HCT116 (cell line): ENCODE measurements at regions of chr16 and their contacts with region 1.

Region 1: GRCh38 chr16:3173892-3174617 is 13.9 kb upstream of the OR1F1 start:
- DNase-seq: no peak
- ATAC-seq: peak; percentile 30
- H3K4me3 ChIP-seq: peak overlapping the region; percentile 23 to 24
- H3K27ac ChIP-seq: peak overlapping the region; percentile 26
- H3K4me1 ChIP-seq: peaks cover 35 to 54% of the 10 kb centered on the region in 2 experiments
- H3K27me3 ChIP-seq: no peaks in the 10 kb centered on the region
- CTCF ChIP-seq: peak in 2 of 3 experiments; percentile 89 to 94; a peak in 4 of 6 replicates
- POLR2A ChIP-seq: peak; percentile 44
- RAD21 ChIP-seq: no peak

Region 2: DNA sequence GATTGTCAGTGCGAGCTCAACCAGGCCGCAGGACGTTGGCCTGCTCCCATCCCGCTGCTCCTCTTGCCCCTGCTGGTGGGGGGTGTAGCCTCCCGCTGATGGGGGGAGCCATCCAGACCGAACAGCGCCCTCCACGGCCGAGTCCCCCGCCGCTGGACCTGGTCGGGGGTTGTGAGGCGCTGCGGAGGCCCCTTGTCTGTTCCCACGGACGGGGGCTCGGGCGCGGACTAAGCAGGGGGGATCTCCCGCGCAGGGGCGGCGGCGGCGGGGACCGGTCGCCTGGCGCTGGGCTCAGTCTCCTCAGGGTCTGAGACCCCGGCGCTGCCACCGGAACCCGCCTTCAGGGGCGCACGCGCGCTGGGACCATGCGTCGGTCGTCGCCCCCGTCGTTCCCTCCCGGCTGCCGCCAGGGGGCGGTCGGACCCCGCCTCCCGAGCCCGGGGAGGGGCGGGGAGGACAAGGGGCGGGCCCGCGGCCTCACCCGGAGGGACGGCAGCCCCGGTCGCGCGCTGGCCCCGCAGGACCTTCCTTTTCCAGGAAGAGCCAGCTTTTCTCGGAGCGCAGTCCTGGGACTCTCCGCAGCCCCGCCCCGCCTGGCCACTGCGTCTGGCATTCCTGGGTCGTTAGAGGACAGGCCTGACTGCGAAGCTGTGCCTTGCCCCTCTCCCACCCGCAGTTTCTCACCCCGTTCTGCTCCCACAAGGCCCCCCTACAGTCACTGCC is 114.9 kb before region 1 on chr16:
- CTCF ChIA-PET with region 1: interaction called, 5 read pairs
- POLR2A ChIA-PET with region 1: interaction called, 3 read pairs
- RAD21 ChIA-PET with region 1: no interaction called
- intact Hi-C with region 1: loop called (anchors 10 kb)
- DNase-seq: peak; percentile 60
- ATAC-seq: peak; percentile 86
- H3K4me3 ChIP-seq: peak overlapping the region; percentile 81 to 87
- H3K27ac ChIP-seq: peak overlapping the region; percentile 84
- H3K4me1 ChIP-seq: peaks cover 0 to 22% of the 10 kb centered on the region in 2 experiments; a peak in 3 of 4 replicates
- H3K27me3 ChIP-seq: no peaks in the 10 kb centered on the region
- CTCF ChIP-seq: peak; percentile 58 to 94 (median 66)
- POLR2A ChIP-seq: no peak
- RAD21 ChIP-seq: peak; percentile 89

Region 3: GRCh38 chr16:3094289-3095027 is 79.6 kb before region 1 on chr16:
- CTCF ChIA-PET with region 1: no interaction called
- POLR2A ChIA-PET with region 1: no interaction called
- RAD21 ChIA-PET with region 1: no interaction called
- intact Hi-C with region 1: loop called (anchors 2 kb)
- DNase-seq: peak; percentile 47
- ATAC-seq: peak; percentile 70
- H3K4me3 ChIP-seq: no peak overlapping the region
- H3K27ac ChIP-seq: no peak overlapping the region
- H3K4me1 ChIP-seq: peaks cover under 1 to 8% of the 10 kb centered on the region in 2 experiments; a peak in 3 of 4 replicates
- H3K27me3 ChIP-seq: no peaks in the 10 kb centered on the region
- CTCF ChIP-seq: peak; percentile 55 to 85 (median 80); a peak in 5 of 6 replicates
- POLR2A ChIP-seq: no peak
- RAD21 ChIP-seq: peak; percentile 62

Region 4: DNA sequence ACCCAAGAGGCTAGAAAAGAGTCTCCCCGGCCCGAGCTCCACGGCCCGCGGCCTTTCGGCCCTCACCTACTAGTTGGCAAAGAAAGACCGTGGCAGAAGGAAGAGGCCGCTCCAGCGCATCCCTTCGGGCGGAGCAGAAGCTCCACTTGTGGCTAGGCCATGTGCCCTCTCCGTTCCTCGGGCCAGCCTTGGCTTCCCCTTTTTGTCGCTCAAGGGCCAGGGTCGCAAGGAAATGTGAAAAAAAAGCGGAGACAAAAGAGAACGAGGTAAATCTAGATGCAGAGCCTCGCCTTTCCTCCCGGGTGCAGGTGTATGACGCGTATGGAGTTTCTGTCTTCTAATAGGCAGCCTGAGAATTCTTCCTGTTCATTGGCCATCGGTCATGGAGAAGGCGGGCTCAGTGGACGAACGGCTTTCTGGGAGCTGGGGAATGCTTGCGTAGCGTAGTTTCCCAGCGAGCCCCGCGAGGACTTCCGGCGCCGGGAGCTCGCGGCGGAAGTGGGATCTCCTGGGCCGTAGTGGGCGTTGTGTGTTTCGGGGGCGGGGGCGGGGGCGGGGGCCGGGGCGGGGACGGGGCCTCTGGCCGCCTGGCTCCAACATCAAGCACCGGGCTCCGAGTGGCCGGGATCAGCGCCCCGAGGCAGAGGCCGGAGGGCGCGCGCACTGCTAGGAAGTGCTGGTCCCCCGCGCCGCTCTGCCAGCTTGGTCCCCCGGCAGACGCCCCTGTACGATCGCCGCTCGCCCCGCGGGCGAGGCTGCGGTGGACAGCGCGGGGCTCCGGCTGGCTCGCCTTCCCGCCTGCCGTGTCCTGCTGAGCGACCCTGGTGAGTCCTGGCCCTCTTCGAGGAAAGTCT is 39.3 kb before region 1 on chr16 and contains the start of gene ZNF213:
- CTCF ChIA-PET with region 1: interaction called, 22 read pairs
- POLR2A ChIA-PET with region 1: interaction called, 11 read pairs
- RAD21 ChIA-PET with region 1: no interaction called
- intact Hi-C with region 1: loop called (anchors 5 kb)
- DNase-seq: peak; percentile 95
- ATAC-seq: peak; percentile 92
- H3K4me3 ChIP-seq: peak within 1 kb of the TSS; percentile 89 to 99
- H3K27ac ChIP-seq: peak within 1 kb of the TSS; percentile 92
- H3K4me1 ChIP-seq: peaks cover 14 to 18% of the 10 kb centered on the region in 2 experiments
- H3K27me3 ChIP-seq: no peaks in the 10 kb centered on the region
- CTCF ChIP-seq: no peak
- POLR2A ChIP-seq: peak; percentile 77
- RAD21 ChIP-seq: no peak
- total RNA-seq, gene ZNF213: 11.0 TPM

Region 5: DNA sequence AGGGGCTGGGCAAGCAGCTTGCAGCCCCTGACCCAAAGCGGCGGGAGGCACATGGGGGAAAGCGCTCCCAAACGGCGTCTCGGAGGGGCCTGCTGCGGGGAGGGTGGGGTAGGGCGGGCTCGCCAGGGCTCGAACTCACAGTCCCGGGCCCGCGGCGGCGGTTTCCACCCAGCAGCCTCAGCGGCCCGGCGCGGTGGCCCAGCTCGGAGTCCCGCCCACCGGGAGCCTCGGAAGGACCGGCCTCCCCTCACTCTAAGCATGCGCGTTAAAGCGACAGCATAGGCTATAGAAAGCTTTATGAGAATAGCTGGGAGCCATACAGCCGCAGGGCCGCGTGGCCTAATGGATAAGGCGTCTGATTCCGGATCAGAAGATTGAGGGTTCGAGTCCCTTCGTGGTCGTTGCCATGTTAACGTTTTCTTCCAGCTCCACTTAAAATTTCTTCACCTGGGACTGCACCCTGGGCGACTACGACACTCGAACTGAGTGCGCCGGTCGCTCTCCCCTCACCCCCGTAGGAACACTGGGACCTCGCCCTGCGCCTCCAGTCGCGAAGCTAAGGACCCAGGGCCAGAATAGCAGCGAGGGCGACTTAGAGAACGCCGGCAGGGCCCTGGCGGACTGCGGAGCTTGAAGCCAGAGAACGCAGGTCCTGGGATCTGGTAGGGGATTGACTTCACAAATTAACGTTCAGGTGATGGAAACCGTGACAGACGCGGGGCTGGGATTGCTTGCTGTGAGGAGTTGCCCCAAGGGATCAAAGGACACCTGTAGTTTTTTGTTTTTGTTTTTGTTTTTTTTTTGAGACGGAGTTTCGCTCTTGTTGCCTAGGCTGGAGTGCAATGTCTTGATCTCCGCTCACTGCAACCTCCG is 23.5 kb before region 1 on chr16:
- CTCF ChIA-PET with region 1: interaction called, 41 read pairs
- POLR2A ChIA-PET with region 1: interaction called, 8 read pairs
- RAD21 ChIA-PET with region 1: interaction called in 1 of 2 experiments, 3 read pairs
- intact Hi-C with region 1: loop called (anchors 2 kb)
- DNase-seq: peak; percentile 92
- ATAC-seq: peak; percentile 77
- H3K4me3 ChIP-seq: peak overlapping the region; percentile 54 to 65
- H3K27ac ChIP-seq: peak overlapping the region; percentile 95
- H3K4me1 ChIP-seq: peaks cover 8 to 38% of the 10 kb centered on the region in 2 experiments
- H3K27me3 ChIP-seq: no peaks in the 10 kb centered on the region
- CTCF ChIP-seq: no peak
- POLR2A ChIP-seq: no peak
- RAD21 ChIP-seq: no peak

Region 6: GRCh38 chr16:3158471-3159314 is 15.4 kb before region 1 on chr16:
- CTCF ChIA-PET with region 1: interaction called, 21 read pairs
- POLR2A ChIA-PET with region 1: interaction called, 20 read pairs
- RAD21 ChIA-PET with region 1: interaction called in 1 of 2 experiments, 4 read pairs
- intact Hi-C with region 1: no loop called
- DNase-seq: peak; percentile 88
- ATAC-seq: peak; percentile 62
- H3K4me3 ChIP-seq: peak overlapping the region; percentile 67 to 78
- H3K27ac ChIP-seq: peak overlapping the region; percentile 91
- H3K4me1 ChIP-seq: peaks cover 14 to 60% of the 10 kb centered on the region in 2 experiments; a peak in 3 of 4 replicates
- H3K27me3 ChIP-seq: no peaks in the 10 kb centered on the region
- CTCF ChIP-seq: no peak
- POLR2A ChIP-seq: peak; percentile 40
- RAD21 ChIP-seq: no peak